ENCODE measurements at regions of chr20 and their contacts with region 1.

Region 1: DNA sequence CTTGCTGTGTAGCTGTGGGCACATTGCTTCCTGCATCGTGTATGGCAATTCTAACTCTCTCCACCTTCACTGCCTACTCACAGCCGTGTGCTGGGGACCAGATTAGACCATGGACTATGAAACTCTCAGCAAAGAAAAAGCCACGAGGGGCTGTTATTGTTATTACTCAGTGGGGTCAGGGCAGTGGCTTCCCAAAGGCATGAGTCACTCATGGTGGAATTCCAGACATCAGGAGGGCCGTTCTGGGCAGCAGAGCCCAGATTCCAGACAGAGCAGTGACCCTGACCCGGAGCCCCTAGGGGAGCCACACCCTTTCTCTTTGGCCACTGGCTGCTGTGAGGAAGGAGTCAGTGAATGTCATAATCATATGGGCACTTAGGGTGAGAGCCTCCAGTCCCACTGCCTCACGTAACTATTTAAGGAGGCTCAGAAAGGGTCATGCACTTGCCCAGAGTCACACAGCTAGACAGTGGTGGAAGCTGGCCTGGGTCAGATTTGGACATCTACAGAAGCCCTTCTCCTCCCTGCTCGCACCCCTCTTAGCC is 22.2 kb upstream of the CCN5 start:
- DNase-seq: peak; percentile 76
- ATAC-seq: peak; percentile 82

Region 2: GRCh38 chr20:44598423-44599305 is 94.3 kb before region 1 on chr20:
- intact Hi-C with region 1: no loop called
- DNase-seq: no peak
- ATAC-seq: peak; percentile 45

Region 3: GRCh38 chr20:44714696-44715482 is 21.9 kb after region 1 on chr20 and contains the start of gene CCN5:
- intact Hi-C with region 1: loop called (anchors 2 kb)
- DNase-seq: peak; percentile 95
- ATAC-seq: peak; percentile 84
- total RNA-seq, gene CCN5: 13.6 TPM

Region 4: GRCh38 chr20:44733341-44734069 is 40.5 kb after region 1 on chr20:
- intact Hi-C with region 1: loop called (anchors 1 kb)
- DNase-seq: no peak
- ATAC-seq: peak; percentile 54

Measured in Right ventricle myocardium inferior (tissue), 1 donor.